ENCODE measurements at regions of chr1 and their contacts with region 1.

Region 1: DNA sequence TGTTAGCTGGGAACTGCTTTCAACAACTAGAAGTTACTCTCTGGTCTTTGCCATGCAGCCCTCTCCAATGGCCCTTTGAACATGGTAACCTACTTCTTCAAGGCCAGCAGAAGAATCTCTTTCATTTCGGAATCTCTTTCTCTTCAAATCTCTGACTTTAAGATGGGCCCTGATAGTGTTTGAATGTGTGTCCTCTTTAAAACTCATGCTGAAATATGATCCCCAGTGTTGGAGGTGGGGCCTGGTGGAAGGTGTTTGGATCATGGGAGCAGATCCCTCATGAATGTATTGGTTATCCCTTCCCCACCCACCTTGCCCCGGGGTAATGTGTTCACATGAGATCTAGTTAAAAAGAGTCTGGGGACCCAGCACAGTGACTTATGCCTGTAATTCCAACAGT is 54.5 kb upstream of the SOX13 start:
- DNase-seq: no peak
- H3K4me3 ChIP-seq: no peak overlapping the region
- H3K27ac ChIP-seq: no peak overlapping the region
- H3K4me1 ChIP-seq: no peaks in the 10 kb centered on the region
- H3K27me3 ChIP-seq: no peaks in the 10 kb centered on the region
- CTCF ChIP-seq: no peak

Region 2: DNA sequence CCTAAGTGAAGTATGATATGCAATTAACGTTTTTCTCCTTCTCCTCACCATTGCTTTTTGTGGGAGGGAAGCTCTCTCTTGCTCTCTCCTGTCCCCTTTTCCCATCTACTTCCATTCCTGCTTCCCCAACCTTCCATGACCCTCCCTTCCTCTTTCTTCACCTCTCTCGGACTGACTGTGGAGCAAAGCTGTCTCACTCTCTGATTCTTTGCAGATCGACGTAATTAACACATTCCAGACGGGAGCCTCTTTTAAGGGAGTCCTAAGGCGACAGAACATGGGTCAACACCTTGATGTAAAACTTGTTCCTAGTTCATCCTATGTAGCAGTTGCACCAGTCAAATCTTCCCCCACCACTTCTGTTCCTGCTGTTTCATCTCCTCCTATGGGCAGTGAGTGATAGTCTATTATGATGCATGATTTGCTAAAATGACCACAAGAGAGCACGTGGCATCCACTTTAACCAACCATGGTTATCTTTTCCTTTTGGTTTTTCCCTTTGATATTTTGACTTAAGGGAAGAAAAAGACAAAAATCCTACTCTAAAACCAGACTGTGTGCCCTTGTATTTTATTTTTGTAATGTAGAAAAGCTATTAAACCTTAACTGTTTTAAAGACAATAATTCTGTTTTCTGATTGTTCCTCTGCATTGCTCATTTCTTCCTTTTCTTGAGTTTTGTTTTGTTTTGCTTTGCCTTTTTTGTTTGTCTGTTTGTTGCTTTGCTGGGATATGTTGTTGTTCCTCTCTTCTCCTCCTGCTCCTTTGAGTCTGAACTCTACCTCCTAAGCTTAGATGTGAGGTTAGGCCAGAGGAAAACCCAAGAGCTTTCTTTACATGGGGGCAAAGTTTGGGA is 285.2 kb before region 1 on chr1:
- CTCF ChIA-PET with region 1: no interaction called
- POLR2A ChIA-PET with region 1: no interaction called
- intact Hi-C with region 1: no loop called
- DNase-seq: no peak
- H3K4me3 ChIP-seq: no peak overlapping the region
- H3K27ac ChIP-seq: no peak overlapping the region
- H3K4me1 ChIP-seq: no peaks in the 10 kb centered on the region
- H3K27me3 ChIP-seq: no peaks in the 10 kb centered on the region
- CTCF ChIP-seq: no peak

Region 3: DNA sequence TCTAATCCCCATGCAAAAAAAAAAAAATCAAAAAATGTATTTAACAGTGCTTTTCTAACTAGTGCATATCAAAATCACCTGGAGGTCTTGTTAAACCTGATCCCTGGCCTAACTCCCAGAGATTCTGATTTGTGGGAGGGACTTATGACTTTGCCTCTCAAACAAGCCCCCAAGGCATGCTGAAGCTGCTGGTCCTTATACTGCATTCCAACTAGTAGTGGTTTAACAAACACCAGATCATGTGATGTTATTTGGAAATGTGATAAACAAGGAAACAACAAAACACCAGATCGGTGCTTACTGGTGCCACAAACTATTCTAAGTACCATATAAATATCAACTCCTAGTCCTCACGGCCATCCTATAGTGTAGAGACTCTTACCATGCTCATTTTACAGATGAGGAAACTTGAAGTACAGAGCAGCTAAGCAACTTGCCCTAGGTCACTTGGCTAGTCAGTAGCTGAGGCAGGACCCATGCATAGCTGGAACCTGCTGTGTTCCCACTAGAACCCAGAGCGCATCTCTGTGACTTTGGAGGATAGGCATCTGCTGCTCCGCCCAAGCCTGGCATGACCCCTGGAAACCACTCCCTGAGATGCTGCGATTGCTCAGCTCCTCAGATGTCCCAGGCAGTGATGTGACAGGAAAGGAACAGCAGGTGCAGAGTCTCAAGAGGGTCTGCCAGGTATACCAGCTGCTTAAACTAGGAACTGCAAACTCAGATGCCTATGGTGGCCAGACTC is 92.6 kb after region 1 on chr1:
- CTCF ChIA-PET with region 1: no interaction called
- POLR2A ChIA-PET with region 1: interaction called, 19 read pairs
- intact Hi-C with region 1: no loop called
- DNase-seq: no peak
- H3K4me3 ChIP-seq: no peak overlapping the region
- H3K27ac ChIP-seq: no peak overlapping the region
- H3K4me1 ChIP-seq: peaks cover 12% of the 10 kb centered on the region
- H3K27me3 ChIP-seq: no peaks in the 10 kb centered on the region
- CTCF ChIP-seq: no peak